RWPE1 (cell line): ENCODE measurements at regions of chr9 and their contacts with region 1.

Region 1: DNA sequence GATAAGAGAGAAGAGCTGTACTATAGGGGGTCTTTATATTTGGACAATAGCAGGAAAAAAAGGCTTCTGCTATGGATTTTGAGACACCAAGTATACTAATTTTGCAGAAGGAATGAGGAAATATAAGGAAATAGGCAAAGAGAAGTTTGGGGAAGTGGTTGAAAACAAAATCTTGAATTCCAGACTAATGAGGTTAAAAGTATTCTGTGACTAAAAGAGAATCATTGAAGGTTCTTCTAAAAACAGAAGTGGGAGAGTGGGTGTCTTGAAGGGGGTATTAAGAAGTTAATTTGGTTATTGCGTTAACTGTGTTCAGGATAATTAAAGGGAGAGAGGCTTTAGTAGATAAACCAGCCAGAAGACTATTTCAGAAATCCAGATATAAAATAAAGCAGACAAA is 148.7 kb downstream of the RFK start:
- DNase-seq: no peak
- H3K27ac ChIP-seq: no peak overlapping the region
- CTCF ChIP-seq: no peak

Region 2: DNA sequence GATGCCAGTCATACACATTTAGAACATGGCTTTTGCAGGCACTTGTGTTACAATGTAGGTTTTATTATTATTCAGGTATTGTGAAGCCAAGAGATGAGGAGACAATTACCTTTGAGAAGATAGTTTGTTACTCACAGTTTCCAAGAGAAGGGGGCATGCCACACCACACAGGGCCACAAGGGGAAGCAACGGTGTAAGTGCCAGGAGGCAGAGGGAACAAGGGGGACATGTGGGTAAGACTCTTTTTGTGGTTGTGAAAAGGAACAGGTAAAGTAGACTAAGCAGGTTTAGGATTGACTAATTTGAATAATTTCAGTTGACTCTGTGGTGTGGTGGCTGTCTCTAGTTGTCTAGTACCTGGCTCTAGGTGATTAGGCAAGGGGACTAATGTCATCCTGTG is 1549.0 kb before region 1 on chr9:
- CTCF ChIA-PET with region 1: no interaction called
- POLR2A ChIA-PET with region 1: interaction called, 14 read pairs
- DNase-seq: no peak
- H3K27ac ChIP-seq: no peak overlapping the region
- CTCF ChIP-seq: no peak

Region 3: DNA sequence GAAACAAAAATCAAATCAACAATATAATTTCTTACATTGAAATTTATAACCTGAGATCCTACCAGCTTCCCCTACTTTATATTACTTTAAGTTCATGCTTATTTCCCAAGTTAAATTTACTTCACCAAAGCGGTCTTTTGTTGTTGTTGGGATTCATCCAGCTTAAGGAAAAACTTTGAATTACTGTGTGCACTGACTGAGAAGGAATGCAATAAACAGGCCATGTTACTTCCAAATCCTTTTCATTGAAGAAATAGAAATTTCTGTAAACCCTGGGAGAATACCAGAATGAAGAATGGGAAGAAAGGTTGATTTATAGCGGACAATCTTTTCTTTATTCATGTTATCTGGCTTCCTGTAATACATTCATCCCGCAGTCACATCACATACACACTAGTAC is 527.5 kb after region 1 on chr9:
- CTCF ChIA-PET with region 1: no interaction called
- POLR2A ChIA-PET with region 1: interaction called, 12 read pairs
- DNase-seq: no peak
- H3K27ac ChIP-seq: no peak overlapping the region
- CTCF ChIP-seq: no peak